ENCODE measurements at regions of chr15 and their contacts with region 1.

Region 1: GRCh38 chr15:74302821-74303359 is 64.6 kb downstream of the CYP11A1 start:
- DNase-seq: peak; percentile 93
- H3K4me3 ChIP-seq: no peak overlapping the region; a peak in 1 of 4 replicates
- H3K27ac ChIP-seq: peak overlapping the region in 1 of 2 experiments; percentile 95; a peak in 2 of 4 replicates
- H3K4me1 ChIP-seq: peaks cover 0 to 50% of the 10 kb centered on the region in 2 experiments; a peak in 2 of 4 replicates
- H3K27me3 ChIP-seq: no peaks in the 10 kb centered on the region
- CTCF ChIP-seq: peak; percentile 77
- EP300 ChIP-seq: peak in 1 of 2 experiments; percentile 90; a peak in 2 of 4 replicates
- RAD21 ChIP-seq: peak; percentile 87

Region 2: GRCh38 chr15:74240002-74240568 is 62.8 kb before region 1 on chr15:
- CTCF ChIA-PET with region 1: interaction called, 14 read pairs
- POLR2A ChIA-PET with region 1: no interaction called
- DNase-seq: peak; percentile 82
- H3K4me3 ChIP-seq: no peak overlapping the region
- H3K27ac ChIP-seq: peak overlapping the region; percentile 70 to 97
- H3K4me1 ChIP-seq: peaks cover 49 to 59% of the 10 kb centered on the region in 2 experiments
- H3K27me3 ChIP-seq: no peaks in the 10 kb centered on the region
- CTCF ChIP-seq: peak; percentile 72
- EP300 ChIP-seq: peak; percentile 63 to 81; a peak in 3 of 4 replicates
- RAD21 ChIP-seq: peak; percentile 41

Region 3: GRCh38 chr15:74251131-74251811 is 51.6 kb before region 1 on chr15:
- CTCF ChIA-PET with region 1: interaction called, 13 read pairs
- POLR2A ChIA-PET with region 1: no interaction called
- DNase-seq: peak; percentile 54
- H3K4me3 ChIP-seq: no peak overlapping the region
- H3K27ac ChIP-seq: peak overlapping the region in 1 of 2 experiments; percentile 94; a peak in 2 of 4 replicates
- H3K4me1 ChIP-seq: peaks cover 6 to 40% of the 10 kb centered on the region in 2 experiments; a peak in 3 of 4 replicates
- H3K27me3 ChIP-seq: no peaks in the 10 kb centered on the region
- CTCF ChIP-seq: no peak
- EP300 ChIP-seq: peak in 1 of 2 experiments; percentile 62; a peak in 2 of 4 replicates
- RAD21 ChIP-seq: peak; percentile 34

Region 4: DNA sequence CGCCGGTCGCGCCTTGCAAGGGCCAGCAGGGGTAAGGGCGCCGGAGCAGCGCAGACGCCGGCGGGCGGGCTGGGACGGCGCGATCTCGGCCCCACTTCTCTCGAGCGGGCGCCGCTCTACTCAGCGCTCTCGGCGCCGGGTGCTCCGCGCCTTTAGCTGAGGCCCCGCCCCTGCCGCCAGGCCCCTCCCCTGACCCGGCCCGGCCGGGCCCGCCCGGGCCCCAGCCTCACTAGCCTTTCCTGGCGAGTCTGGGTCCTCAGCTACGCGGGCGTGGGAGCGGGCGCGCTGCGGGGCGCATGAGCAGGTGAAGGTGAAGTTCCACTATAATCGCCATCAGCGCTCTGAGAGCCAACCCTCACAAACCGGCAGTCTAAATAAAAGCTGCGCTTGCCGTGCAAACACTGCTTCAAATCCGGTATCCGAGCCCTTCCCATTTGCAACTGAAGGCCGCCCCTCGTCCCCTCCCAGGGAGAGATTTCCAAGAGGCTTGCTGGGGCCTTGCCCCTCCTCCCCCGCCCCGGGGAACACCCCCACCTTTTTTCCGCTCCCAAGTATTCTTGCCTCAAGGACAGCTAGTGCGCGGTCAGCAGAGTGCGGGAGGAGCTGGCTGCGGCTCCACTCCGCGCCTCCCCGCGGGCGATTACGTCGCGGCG is 653.9 kb after region 1 on chr15 and contains the start of gene RPP25:
- CTCF ChIA-PET with region 1: no interaction called
- POLR2A ChIA-PET with region 1: no interaction called
- DNase-seq: peak; percentile 92
- H3K4me3 ChIP-seq: peak within 1 kb of the TSS; percentile 54 to 64
- H3K27ac ChIP-seq: peak within 1 kb of the TSS in 1 of 2 experiments; percentile 98; a peak in 2 of 4 replicates
- H3K4me1 ChIP-seq: peaks cover 0 to 40% of the 10 kb centered on the region in 2 experiments; a peak in 1 of 4 replicates
- H3K27me3 ChIP-seq: no peaks in the 10 kb centered on the region; the same call in 1 of the 2 replicates
- CTCF ChIP-seq: no peak
- EP300 ChIP-seq: no peak
- RAD21 ChIP-seq: no peak
- polyA plus RNA-seq, gene RPP25: 1.7 TPM in 2 replicates